Endothelial cell of umbilical vein (primary cell): ENCODE measurements at regions of chr17 and their contacts with region 1.

Region 1: GRCh38 chr17:75034236-75034908 is 12.4 kb downstream of the ATP5PD start:
- DNase-seq: peak; percentile 88
- H3K4me3 ChIP-seq: peak overlapping the region; percentile 58 to 87 (median 74)
- H3K27ac ChIP-seq: peak overlapping the region; percentile 69
- H3K4me1 ChIP-seq: peaks cover 20% of the 10 kb centered on the region
- H3K27me3 ChIP-seq: peaks cover 0 to 2% of the 10 kb centered on the region in 2 experiments
- CTCF ChIP-seq: no peak
- POLR2A ChIP-seq: no peak

Region 2: GRCh38 chr17:74981979-74982662 is 52.3 kb before region 1 on chr17:
- CTCF ChIA-PET with region 1: interaction called, 8 read pairs
- POLR2A ChIA-PET with region 1: no interaction called
- dilution Hi-C with region 1: no loop called
- intact Hi-C with region 1: loop called (anchors 2 kb)
- DNase-seq: peak; percentile 47
- H3K4me3 ChIP-seq: peak overlapping the region; percentile 12 to 38 (median 25)
- H3K27ac ChIP-seq: peak overlapping the region; percentile 1
- H3K4me1 ChIP-seq: peaks cover 11% of the 10 kb centered on the region
- H3K27me3 ChIP-seq: peaks cover 0 to 2% of the 10 kb centered on the region in 2 experiments
- CTCF ChIP-seq: no peak
- POLR2A ChIP-seq: peak; percentile 66

Region 3: DNA sequence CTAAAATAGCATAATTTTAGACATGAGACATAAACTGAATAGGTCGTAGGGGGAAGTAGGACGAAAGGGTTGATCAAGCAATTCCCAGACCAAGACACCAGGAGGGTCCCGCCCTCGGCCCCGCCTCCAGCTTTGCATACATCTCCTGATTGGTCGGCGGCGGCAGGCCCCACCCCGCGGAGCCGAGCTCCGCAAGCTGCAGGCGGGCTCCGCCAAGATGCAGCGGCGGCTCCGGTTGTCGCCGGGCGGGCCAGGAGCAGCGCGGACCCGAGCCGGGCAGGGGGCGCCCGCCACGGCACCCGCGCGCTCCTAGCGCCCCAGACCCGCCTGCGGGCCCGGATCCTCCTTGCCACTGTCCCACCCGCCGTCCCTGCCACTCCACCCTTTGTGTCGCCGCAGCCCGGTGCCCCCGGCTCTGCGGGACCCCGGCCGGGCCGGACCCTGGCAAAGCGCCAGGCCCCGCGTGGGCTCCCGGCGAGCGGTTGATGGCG is 46.9 kb before region 1 on chr17 and contains the start of gene CDR2L:
- CTCF ChIA-PET with region 1: interaction called, 8 read pairs
- POLR2A ChIA-PET with region 1: no interaction called
- dilution Hi-C with region 1: no loop called
- intact Hi-C with region 1: loop called (anchors 1 kb)
- DNase-seq: peak; percentile 95
- H3K4me3 ChIP-seq: peak within 1 kb of the TSS; percentile 47 to 89 (median 67)
- H3K27ac ChIP-seq: peak within 1 kb of the TSS; percentile 93
- H3K4me1 ChIP-seq: peaks cover 12% of the 10 kb centered on the region
- H3K27me3 ChIP-seq: no peaks in the 10 kb centered on the region
- CTCF ChIP-seq: no peak
- POLR2A ChIP-seq: peak; percentile 52
- total RNA-seq, gene CDR2L: 34.9 and 36.7 TPM in 2 replicates

Region 4: DNA sequence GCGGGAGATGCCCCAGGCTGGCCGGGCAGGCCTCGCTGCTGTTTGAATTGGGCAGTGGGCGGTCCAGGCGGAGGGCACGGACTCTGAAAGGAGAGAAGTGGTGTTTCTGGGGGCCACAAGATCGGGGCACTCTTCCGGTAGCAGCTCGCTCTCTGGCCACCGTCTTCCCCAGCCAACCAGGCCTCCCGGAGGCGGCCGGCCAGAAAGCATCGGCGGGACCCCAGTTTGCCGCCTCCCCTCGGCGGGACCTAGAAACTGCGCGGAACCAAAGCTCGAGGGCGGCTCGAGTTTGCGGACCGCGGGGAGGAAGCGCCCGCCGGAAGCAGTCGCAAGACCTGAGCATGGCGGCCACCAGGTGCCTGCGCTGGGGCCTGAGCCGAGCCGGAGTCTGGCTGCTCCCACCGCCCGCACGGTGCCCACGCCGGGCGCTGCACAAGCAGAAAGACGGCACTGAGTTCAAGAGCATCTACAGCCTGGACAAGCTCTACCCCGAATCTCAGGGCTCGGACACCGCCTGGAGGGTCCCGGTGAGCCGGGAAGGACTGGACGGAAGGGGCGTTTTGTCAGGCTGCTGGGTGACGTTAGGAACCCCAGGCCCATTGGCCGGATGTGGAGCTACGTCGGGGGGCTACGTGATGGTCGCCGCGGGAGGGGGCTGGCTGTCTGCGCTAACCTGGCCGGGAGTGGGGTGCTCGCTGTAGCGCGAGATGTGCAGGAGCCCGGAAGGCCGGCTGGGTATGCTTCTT is 21.9 kb before region 1 on chr17 and contains the start of gene MRPL58:
- CTCF ChIA-PET with region 1: interaction called, 21 read pairs
- POLR2A ChIA-PET with region 1: interaction called, 6 read pairs
- dilution Hi-C with region 1: no loop called
- intact Hi-C with region 1: loop called (anchors 1 kb)
- DNase-seq: peak; percentile 81
- H3K4me3 ChIP-seq: peak within 1 kb of the TSS; percentile 56 to 89 (median 83)
- H3K27ac ChIP-seq: peak within 1 kb of the TSS; percentile 67
- H3K4me1 ChIP-seq: peaks cover 16% of the 10 kb centered on the region
- H3K27me3 ChIP-seq: no peaks in the 10 kb centered on the region
- CTCF ChIP-seq: peak; percentile 40 to 76
- POLR2A ChIP-seq: peak; percentile 84
- total RNA-seq, gene MRPL58: 38.0 and 38.8 TPM in 2 replicates

Region 5: DNA sequence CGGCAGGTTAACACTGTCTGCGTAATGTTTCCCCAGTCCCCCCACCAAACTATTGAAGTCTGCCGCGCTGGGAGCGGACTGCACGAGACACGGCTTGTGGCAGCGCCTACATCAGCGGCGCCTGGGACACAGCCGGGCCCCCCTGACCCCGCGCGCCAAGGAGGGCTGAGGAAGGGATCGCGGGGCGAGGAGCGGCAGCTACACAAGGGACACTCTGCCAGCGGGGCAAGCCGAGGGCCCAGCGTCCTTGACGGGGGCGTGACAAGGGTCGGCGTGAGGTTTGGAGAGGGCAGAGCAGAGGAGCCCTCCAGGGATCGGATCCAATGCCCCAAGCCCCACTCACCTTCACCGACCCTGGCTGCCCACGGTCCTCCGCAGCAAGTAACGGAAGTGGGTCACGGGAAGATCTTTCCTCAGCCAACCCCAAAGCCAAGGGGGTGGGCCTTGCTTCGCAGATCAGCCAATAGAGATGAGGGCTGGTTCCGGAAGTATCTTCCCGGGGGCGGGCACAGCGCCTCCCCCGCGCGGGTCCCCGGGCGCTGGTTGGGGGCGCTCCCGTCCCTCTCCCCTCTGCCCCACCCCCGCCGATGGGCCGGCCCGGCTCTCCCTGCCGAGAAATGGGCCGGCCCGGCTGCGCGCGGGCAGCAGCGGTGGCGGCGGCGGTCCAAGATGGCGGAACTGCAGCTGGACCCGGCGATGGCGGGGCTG is 12.4 kb after region 1 on chr17 and contains the starts of genes ATP5PD and KCTD2:
- CTCF ChIA-PET with region 1: interaction called, 3 read pairs
- POLR2A ChIA-PET with region 1: no interaction called
- dilution Hi-C with region 1: no loop called
- intact Hi-C with region 1: loop called (anchors 1 kb)
- DNase-seq: peak; percentile 98
- H3K4me3 ChIP-seq: peak within 1 kb of the TSS; percentile 58 to 93 (median 67)
- H3K27ac ChIP-seq: peak within 1 kb of the TSS; percentile 19
- H3K4me1 ChIP-seq: peaks cover 13% of the 10 kb centered on the region
- H3K27me3 ChIP-seq: no peaks in the 10 kb centered on the region
- CTCF ChIP-seq: no peak
- POLR2A ChIP-seq: peak; percentile 93
- total RNA-seq, gene ATP5PD: 200 and 202 TPM in 2 replicates
- total RNA-seq, gene KCTD2: 20.6 and 23.2 TPM in 2 replicates

Region 6: DNA sequence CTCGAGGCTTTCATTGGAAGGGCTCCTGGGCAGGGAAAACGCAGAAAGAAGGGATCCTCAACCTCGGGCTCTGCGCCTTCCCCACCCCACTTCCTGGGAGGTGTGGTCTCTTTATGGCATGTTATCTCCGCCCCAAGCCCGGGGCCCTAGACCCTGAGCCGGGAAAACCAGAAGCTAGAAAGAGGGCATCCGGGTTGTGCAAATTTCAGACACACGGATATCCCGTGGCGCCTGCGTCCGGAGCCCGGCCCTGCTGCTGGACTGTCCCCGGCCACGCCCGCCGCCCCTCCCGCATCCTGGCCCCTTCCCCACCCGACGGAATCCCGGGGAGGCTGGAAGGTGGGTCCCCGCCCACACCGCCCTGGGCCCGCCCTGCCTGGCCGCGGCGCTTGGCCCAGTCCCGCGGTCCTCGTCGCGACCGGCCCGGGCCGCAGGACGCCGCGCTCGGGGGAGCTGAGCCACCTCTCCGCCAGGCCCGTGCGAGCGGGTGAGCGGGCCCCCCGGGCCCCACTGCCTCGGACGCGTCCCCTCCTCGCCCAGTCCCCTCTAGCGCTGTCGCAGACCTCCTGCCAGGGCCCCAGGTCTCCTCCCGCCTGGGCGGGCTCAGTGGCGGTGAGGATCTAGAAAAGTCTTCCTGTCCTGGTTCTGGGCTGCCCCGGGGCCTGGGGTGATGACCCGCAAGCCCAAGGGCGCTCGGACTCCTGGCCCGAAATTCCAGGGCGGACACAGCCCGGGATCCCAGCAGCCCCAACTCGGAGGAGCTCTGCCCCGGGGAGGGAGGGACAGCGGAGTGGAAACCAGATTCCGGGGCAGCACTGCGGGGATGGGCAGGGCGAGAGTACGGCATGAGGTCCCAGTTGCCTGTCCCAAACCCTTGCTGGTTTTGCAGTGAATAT is 53.4 kb after region 1 on chr17 and contains the start of gene SLC16A5:
- CTCF ChIA-PET with region 1: interaction called, 3 read pairs
- POLR2A ChIA-PET with region 1: no interaction called
- dilution Hi-C with region 1: no loop called
- intact Hi-C with region 1: loop called (anchors 2 kb)
- DNase-seq: peak; percentile 81
- H3K4me3 ChIP-seq: peak within 1 kb of the TSS; percentile 23 to 52 (median 46)
- H3K27ac ChIP-seq: peak within 1 kb of the TSS; percentile 88
- H3K4me1 ChIP-seq: peaks cover 42% of the 10 kb centered on the region
- H3K27me3 ChIP-seq: no peaks in the 10 kb centered on the region
- CTCF ChIP-seq: no peak
- POLR2A ChIP-seq: peak; percentile 74
- total RNA-seq, gene SLC16A5: 16.4 and 17.4 TPM in 2 replicates